ENCODE measurements at regions of chr1 and their contacts with region 1.

Region 1: DNA sequence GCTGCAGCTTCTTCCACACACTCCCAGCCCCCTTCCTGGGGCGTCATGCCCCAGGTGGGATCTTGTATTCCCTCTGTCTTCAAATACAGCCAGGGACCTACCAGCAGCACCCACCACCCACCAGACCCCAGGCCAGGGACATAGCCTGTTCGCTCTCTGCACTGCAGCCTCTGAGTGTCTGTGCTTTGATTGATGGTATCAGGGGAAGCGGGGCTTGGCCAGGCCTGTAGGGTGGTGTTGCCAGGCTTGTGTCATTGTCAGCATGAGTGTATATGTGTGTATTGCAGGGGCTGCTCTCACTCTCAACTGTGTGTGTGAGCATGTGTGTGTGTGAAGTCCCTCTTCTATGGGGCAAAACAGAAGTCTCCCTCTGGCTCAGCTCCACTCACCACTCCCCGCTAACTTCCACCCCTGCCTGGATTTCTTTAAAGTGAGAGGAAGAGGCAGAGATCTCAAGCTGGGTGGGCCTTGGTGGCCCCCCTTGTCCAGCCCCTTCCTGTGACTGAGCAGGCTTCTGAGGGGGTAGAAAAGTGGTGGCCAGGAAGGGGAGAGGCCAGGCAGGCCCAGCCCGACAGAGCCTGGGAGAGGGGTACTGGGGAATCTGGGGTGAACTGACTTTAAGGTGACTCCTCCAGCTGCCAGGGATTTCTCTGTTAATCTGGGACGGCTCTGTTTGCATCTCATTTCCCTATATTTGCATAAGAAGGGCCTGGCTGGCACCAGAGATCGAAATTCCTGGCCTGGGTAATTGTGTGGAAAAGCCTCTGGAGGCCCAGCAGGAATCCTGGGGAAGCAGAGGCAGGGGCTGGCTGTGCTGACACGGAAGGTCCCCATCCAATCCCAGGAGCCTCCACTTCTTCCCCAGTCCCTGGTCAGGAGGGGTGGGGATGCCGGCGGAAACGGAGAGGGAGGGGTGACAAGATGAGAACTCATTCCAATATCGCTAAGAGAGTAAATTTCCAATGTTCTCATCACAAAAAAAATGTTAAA is 18.6 kb upstream of the ADGRB2 start:
- DNase-seq: no peak
- H3K4me3 ChIP-seq: no peak overlapping the region
- H3K27ac ChIP-seq: no peak overlapping the region
- H3K4me1 ChIP-seq: peaks cover under 1% of the 10 kb centered on the region; the same call in 1 of the 2 replicates
- H3K27me3 ChIP-seq: no peaks in the 10 kb centered on the region
- CTCF ChIP-seq: no peak

Region 2: DNA sequence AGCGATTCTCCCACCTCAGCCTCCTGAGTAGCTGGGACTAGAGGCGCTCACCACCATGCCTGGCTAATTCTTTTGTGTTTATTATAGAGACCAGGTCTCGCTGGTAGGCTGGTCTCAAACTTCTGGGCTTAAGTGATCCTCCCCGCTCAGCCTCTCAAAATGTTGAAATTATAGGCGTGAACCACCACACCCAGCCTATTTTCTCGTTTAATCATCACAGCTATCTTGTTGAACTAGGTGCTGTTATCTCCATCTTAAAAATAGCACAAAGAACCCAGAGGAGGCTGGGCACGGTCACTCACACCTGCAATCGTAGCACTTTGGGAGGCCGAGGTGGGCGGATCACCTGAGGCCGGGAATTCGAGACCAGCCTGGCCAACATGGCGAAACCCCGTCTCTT is 107.0 kb before region 1 on chr1:
- CTCF ChIA-PET with region 1: no interaction called
- POLR2A ChIA-PET with region 1: interaction called, 15 read pairs
- intact Hi-C with region 1: no loop called
- DNase-seq: peak in 1 of 2 experiments; percentile 81
- H3K4me3 ChIP-seq: no peak overlapping the region
- H3K27ac ChIP-seq: 0 out of 2 replicates have a peak overlapping the region, but pooled peaks have one; percentile 0
- H3K4me1 ChIP-seq: peaks cover 43% of the 10 kb centered on the region
- H3K27me3 ChIP-seq: no peaks in the 10 kb centered on the region
- CTCF ChIP-seq: no peak